CD8-positive, alpha-beta memory T cell (primary cell): ENCODE measurements at regions of chr2 and their contacts with region 1.

Region 1: GRCh38 chr2:20962939-20963557 is 80.8 kb downstream of the APOB start:
- DNase-seq: peak; percentile 33 to 62 (median 45)
- H3K4me3 ChIP-seq: no peak overlapping the region
- H3K4me3 Mint-ChIP-seq: no peak overlapping the region
- H3K27ac ChIP-seq: no peak overlapping the region
- H3K27ac Mint-ChIP-seq: no peak overlapping the region
- H3K4me1 ChIP-seq: no peaks in the 10 kb centered on the region
- H3K4me1 Mint-ChIP-seq: no peaks in the 10 kb centered on the region
- H3K27me3 ChIP-seq: no peaks in the 10 kb centered on the region
- H3K27me3 Mint-ChIP-seq: peaks cover 7 to 43% of the 10 kb centered on the region in 2 donors

Region 2: DNA sequence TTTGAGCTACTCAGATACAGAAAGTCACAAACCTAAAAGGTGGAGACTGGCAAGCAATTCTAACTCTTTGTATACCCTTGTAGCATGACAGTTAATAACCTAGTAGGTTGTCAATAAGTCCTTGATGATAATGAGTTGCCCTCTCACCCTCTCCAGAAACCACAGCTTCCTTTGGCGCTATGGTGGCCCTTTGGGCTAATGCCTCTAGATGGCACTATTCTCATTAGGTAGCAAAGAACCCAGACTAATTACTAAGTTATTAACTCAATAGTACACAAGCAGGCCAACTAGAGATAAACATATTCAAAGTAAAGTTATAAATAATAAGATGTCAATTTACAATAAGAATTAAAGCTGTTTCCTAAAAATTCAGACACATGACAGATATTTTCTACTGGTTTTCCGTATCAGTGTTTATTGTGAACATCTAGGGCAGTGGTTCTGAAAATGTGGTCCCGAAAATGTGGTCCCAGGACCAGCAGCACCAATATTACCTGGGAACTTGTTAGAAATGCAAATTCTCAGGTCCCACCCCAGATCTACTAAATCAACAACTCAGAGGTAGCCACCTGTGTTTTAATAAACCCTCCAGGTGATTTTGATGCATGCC is 181.3 kb before region 1 on chr2:
- CTCF ChIA-PET with region 1: interaction called, 10 read pairs
- POLR2A ChIA-PET with region 1: no interaction called
- DNase-seq: no peak
- H3K4me3 ChIP-seq: no peak overlapping the region
- H3K4me3 Mint-ChIP-seq: no peak overlapping the region
- H3K27ac ChIP-seq: no peak overlapping the region
- H3K27ac Mint-ChIP-seq: no peak overlapping the region
- H3K4me1 ChIP-seq: no peaks in the 10 kb centered on the region
- H3K4me1 Mint-ChIP-seq: peaks cover 2 to 15% (median 6%) of the 10 kb centered on the region in 3 donors
- H3K27me3 ChIP-seq: no peaks in the 10 kb centered on the region
- H3K27me3 Mint-ChIP-seq: no peaks in the 10 kb centered on the region

Region 3: DNA sequence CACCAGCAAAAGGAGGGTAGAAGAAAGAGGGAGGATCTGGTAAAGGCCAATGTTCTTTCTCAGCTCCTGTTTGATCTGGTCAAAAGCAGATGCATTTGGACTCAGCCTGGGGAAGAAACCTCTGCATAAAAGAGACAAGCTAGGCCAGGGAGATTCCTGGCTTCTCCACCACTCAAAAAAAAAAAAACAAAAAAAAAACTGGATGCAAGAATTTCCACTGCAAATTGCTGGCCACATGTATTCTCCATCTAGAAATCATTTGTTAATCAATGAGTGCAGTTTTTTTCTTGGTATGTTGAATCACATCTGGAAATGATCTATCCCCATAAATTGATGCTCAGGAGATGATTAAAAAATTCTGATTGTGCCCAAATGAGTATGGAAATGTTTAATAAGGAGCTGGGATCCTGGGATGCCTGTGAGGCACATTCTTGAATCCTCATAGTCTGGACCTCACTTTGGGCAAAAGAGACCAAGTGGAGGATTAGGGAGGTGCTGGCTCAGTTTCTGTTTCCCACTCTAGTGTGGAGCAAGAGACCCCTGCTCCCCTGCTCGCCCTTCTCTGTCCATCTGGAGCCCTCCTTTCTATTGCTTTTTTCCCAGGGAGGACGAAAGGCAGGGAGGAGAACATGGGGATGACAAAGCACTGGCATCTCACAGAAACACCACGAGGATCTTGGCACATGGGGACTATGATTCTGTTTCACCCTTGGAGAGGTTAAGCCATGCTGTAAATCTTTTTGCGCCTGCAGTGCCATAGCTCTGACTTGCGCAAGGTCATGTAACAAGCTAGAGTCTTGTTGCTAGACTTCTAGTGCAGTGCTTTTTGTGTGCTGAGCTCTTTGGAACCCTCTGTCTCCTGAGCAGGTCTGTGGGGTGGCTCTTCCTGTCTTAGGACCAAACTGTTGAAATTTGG is 23.2 kb after region 1 on chr2:
- CTCF ChIA-PET with region 1: no interaction called
- POLR2A ChIA-PET with region 1: no interaction called
- DNase-seq: no peak
- H3K4me3 ChIP-seq: no peak overlapping the region
- H3K4me3 Mint-ChIP-seq: no peak overlapping the region
- H3K27ac ChIP-seq: no peak overlapping the region
- H3K27ac Mint-ChIP-seq: no peak overlapping the region
- H3K4me1 ChIP-seq: no peaks in the 10 kb centered on the region
- H3K4me1 Mint-ChIP-seq: no peaks in the 10 kb centered on the region
- H3K27me3 ChIP-seq: no peaks in the 10 kb centered on the region
- H3K27me3 Mint-ChIP-seq: peaks cover 10 to 17% of the 10 kb centered on the region in 2 donors